ENCODE measurements at regions of chr9 and their contacts with region 1.

Region 1: GRCh38 chr9:8188720-8189407 is 389.3 kb upstream of the DMAC1 start:
- DNase-seq: no peak
- H3K4me3 ChIP-seq: no peak overlapping the region
- H3K27ac ChIP-seq: no peak overlapping the region
- H3K27me3 ChIP-seq: no peaks in the 10 kb centered on the region
- CTCF ChIP-seq: no peak

Region 2: GRCh38 chr9:8136477-8136876 is 52.4 kb before region 1 on chr9:
- intact Hi-C with region 1: loop called in 1 of 2 experiments (anchors 10 kb)
- DNase-seq: no peak
- H3K4me3 ChIP-seq: no peak overlapping the region
- H3K27ac ChIP-seq: no peak overlapping the region
- H3K27me3 ChIP-seq: no peaks in the 10 kb centered on the region
- CTCF ChIP-seq: no peak

Region 3: DNA sequence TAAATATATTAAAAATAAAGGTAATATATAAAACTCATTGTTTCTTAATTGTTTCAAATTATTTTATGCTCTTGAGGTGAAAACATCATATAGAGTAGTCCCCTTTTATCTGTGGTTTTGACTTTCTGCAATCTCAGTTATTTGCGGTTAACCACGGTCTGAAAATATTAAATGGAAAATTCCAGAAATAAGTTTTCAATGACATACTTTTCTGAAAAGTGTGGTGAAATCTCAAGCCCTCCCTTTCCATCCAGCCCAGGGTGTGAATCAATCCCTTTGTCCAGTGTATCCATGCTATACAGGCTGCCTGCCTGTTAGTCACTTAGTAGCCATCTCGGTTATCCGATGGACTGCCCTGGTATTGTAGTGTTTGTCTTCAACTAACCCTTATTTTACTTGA is 157.4 kb after region 1 on chr9:
- intact Hi-C with region 1: loop called in 1 of 2 experiments (anchors 10 kb)
- DNase-seq: no peak
- H3K4me3 ChIP-seq: no peak overlapping the region
- H3K27ac ChIP-seq: peak overlapping the region in 3 of 59 donors; percentile 77 to 84 (median 83)
- H3K27me3 ChIP-seq: no peaks in the 10 kb centered on the region
- CTCF ChIP-seq: no peak

Measured in dorsolateral prefrontal cortex (tissue), 120 donors.